ENCODE measurements at regions of chr11 and their contacts with region 1.

Region 1: DNA sequence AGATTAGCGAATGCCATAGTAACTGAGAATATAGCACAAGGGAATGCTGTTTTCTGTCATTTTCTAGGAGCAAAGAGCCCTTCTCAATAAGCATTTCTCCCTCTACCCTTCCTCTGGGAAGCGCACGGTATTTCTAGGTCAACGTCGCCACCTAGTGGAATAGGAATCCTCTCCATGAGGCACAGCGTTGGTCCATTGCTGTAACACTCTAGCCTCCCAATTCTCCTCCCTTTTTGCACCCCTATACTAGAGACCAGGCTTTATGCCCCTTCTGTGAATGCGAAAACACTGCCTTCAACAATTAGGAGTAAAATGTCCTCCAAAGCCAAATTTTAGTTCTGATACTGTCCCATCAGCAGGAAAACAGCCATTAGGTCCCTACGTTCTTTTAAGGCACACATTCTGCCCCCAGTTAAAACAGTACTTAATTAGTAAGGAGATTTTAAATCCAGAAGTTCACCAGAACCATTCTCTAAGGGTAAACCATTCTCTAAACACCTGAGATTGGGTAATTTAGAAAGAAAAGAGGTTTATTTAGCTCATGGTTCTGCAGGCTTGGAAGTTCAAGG is 12.8 kb upstream of the HYLS1 start:
- DNase-seq: no peak
- ATAC-seq: peak; percentile 58
- H3K4me3 Mint-ChIP-seq: no peak overlapping the region
- H3K27ac Mint-ChIP-seq: no peak overlapping the region
- H3K4me1 Mint-ChIP-seq: peaks cover 10% of the 10 kb centered on the region
- H3K27me3 Mint-ChIP-seq: no peaks in the 10 kb centered on the region
- CTCF ChIP-seq: no peak

Region 2: GRCh38 chr11:125164422-125165110 is 710.1 kb before region 1 on chr11 and contains the start of gene PKNOX2:
- CTCF ChIA-PET with region 1: no interaction called
- POLR2A ChIA-PET with region 1: no interaction called
- intact Hi-C with region 1: loop called (anchors 5 kb)
- DNase-seq: peak; percentile 39
- ATAC-seq: peak; percentile 61
- H3K4me3 Mint-ChIP-seq: peak within 1 kb of the TSS; percentile 91
- H3K27ac Mint-ChIP-seq: no peak within 1 kb of the TSS
- H3K4me1 Mint-ChIP-seq: peaks cover 21% of the 10 kb centered on the region
- H3K27me3 Mint-ChIP-seq: peaks cover 64% of the 10 kb centered on the region
- CTCF ChIP-seq: no peak
- total RNA-seq, gene PKNOX2: not detected in 2 replicates

Region 3: GRCh38 chr11:125423247-125423849 is 451.3 kb before region 1 on chr11:
- CTCF ChIA-PET with region 1: interaction called, 4 read pairs
- POLR2A ChIA-PET with region 1: no interaction called
- intact Hi-C with region 1: loop called (anchors 1 kb)
- DNase-seq: no peak
- ATAC-seq: peak; percentile 40
- H3K4me3 Mint-ChIP-seq: no peak overlapping the region
- H3K27ac Mint-ChIP-seq: no peak overlapping the region
- H3K4me1 Mint-ChIP-seq: no peaks in the 10 kb centered on the region
- H3K27me3 Mint-ChIP-seq: peaks cover 9% of the 10 kb centered on the region
- CTCF ChIP-seq: no peak

Region 4: DNA sequence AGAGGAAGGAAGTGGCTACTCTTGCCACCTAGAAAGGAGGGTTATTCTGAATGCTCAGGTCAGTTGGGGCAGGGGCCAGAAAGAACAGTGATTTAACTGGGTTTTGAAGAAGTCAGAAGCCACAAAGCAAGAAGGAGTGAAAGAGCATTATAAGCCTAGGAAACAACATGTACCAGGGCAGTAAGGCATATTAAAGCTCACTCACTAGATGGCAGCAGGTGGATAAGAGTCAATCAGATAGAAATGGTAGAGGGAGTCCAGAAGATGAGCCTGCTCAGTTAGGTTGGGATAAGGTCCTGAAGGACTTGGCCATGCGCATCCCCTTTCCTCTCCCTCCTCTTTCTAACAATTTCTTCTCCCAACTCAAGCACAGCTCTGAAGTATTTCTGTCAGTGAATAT is 150.5 kb before region 1 on chr11:
- CTCF ChIA-PET with region 1: interaction called, 3 read pairs
- POLR2A ChIA-PET with region 1: no interaction called
- intact Hi-C with region 1: loop called (anchors 1 kb)
- DNase-seq: no peak
- ATAC-seq: no peak
- H3K4me3 Mint-ChIP-seq: no peak overlapping the region
- H3K27ac Mint-ChIP-seq: no peak overlapping the region
- H3K4me1 Mint-ChIP-seq: no peaks in the 10 kb centered on the region
- H3K27me3 Mint-ChIP-seq: peaks cover 14% of the 10 kb centered on the region
- CTCF ChIP-seq: no peak

Region 5: GRCh38 chr11:125990244-125990643 is 115.6 kb after region 1 on chr11:
- CTCF ChIA-PET with region 1: no interaction called
- POLR2A ChIA-PET with region 1: no interaction called
- intact Hi-C with region 1: no loop called
- DNase-seq: no peak
- ATAC-seq: no peak
- H3K4me3 Mint-ChIP-seq: no peak overlapping the region
- H3K27ac Mint-ChIP-seq: no peak overlapping the region
- H3K4me1 Mint-ChIP-seq: no peaks in the 10 kb centered on the region
- H3K27me3 Mint-ChIP-seq: no peaks in the 10 kb centered on the region
- CTCF ChIP-seq: no peak